ENCODE measurements at regions of chrX and their contacts with region 1.

Region 1: DNA sequence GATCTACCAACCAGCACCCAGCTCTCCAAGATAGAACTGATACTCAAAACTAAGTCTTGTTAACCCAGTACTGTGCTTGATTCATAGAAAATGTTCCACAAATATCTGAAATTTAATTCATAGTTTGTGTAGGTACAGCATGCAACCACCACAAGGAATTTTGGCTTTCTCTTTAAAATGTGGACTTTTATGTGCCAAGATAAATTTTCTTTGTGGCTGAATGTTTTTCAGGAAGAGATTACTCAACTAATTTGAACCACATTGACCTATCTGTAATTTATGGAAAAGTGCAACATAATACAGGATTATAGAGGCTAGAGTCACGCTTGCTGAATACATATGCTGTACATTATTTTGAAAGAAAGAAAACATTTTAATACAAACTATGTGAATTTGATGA is 730.8 kb downstream of the IL1RAPL1 start:
- DNase-seq: no peak
- ATAC-seq: no peak
- H3K4me3 ChIP-seq: no peak overlapping the region
- H3K4me3 Mint-ChIP-seq: no peak overlapping the region
- H3K27ac ChIP-seq: no peak overlapping the region
- H3K27ac Mint-ChIP-seq: no peak overlapping the region
- H3K4me1 ChIP-seq: no peaks in the 10 kb centered on the region
- H3K4me1 Mint-ChIP-seq: no peaks in the 10 kb centered on the region
- H3K27me3 ChIP-seq: no peaks in the 10 kb centered on the region
- H3K27me3 Mint-ChIP-seq: no peaks in the 10 kb centered on the region
- CTCF ChIP-seq: no peak

Region 2: GRCh38 chrX:29376584-29376983 is 58.6 kb after region 1 on chrX:
- CTCF ChIA-PET with region 1: no interaction called
- POLR2A ChIA-PET with region 1: no interaction called
- intact Hi-C with region 1: loop called in 1 of 2 experiments (anchors 10 kb)
- DNase-seq: no peak
- ATAC-seq: no peak
- H3K4me3 ChIP-seq: no peak overlapping the region
- H3K4me3 Mint-ChIP-seq: no peak overlapping the region
- H3K27ac ChIP-seq: no peak overlapping the region
- H3K27ac Mint-ChIP-seq: no peak overlapping the region
- H3K4me1 ChIP-seq: no peaks in the 10 kb centered on the region
- H3K4me1 Mint-ChIP-seq: no peaks in the 10 kb centered on the region
- H3K27me3 ChIP-seq: no peaks in the 10 kb centered on the region
- H3K27me3 Mint-ChIP-seq: no peaks in the 10 kb centered on the region
- CTCF ChIP-seq: no peak